ENCODE measurements at regions of chr9 and their contacts with region 1.

Region 1: GRCh38 chr9:114653556-114654159 is 3.9 kb downstream of the TEX53 start:
- DNase-seq: peak; percentile 89
- ATAC-seq: peak; percentile 83
- H3K4me3 Mint-ChIP-seq: no peak overlapping the region
- H3K27ac Mint-ChIP-seq: peak overlapping the region; percentile 14
- H3K4me1 Mint-ChIP-seq: peaks cover 26% of the 10 kb centered on the region
- H3K27me3 Mint-ChIP-seq: no peaks in the 10 kb centered on the region

Region 2: GRCh38 chr9:114339130-114339908 is 314.3 kb before region 1 on chr9:
- CTCF ChIA-PET with region 1: interaction called, 7 read pairs
- POLR2A ChIA-PET with region 1: no interaction called
- intact Hi-C with region 1: loop called in 1 of 2 experiments (anchors 1 kb)
- DNase-seq: peak; percentile 74
- ATAC-seq: peak; percentile 71
- H3K4me3 Mint-ChIP-seq: no peak overlapping the region
- H3K27ac Mint-ChIP-seq: peak overlapping the region; percentile 51
- H3K4me1 Mint-ChIP-seq: peaks cover 3% of the 10 kb centered on the region
- H3K27me3 Mint-ChIP-seq: no peaks in the 10 kb centered on the region

Region 3: DNA sequence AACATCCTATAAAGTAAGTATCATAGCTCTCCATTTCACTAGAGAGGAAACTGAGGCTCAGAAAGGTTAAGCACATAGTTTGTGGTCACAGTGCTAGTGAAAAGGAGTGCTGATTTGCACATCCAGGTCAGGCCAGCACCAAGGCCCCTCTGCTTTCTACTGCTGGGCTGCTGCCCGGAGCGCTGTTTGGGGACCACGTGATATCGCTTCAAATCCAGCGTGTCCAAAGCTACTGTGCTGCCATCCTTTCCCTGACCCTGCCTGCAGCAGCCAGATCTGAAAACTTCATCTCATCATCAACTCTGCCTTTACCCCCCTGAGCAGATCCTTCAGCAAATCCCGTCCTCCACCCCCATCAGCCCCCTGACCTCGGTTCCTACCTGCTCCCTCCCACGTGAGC is 225.2 kb before region 1 on chr9:
- CTCF ChIA-PET with region 1: interaction called, 11 read pairs
- POLR2A ChIA-PET with region 1: no interaction called
- intact Hi-C with region 1: no loop called
- DNase-seq: no peak
- ATAC-seq: no peak
- H3K4me3 Mint-ChIP-seq: no peak overlapping the region
- H3K27ac Mint-ChIP-seq: no peak overlapping the region
- H3K4me1 Mint-ChIP-seq: no peaks in the 10 kb centered on the region
- H3K27me3 Mint-ChIP-seq: no peaks in the 10 kb centered on the region

Region 4: GRCh38 chr9:114487607-114488300 is 165.9 kb before region 1 on chr9:
- CTCF ChIA-PET with region 1: interaction called, 55 read pairs
- POLR2A ChIA-PET with region 1: interaction called, 4 read pairs
- intact Hi-C with region 1: loop called (anchors 1 kb)
- DNase-seq: peak; percentile 72
- ATAC-seq: peak; percentile 63
- H3K4me3 Mint-ChIP-seq: no peak overlapping the region
- H3K27ac Mint-ChIP-seq: no peak overlapping the region
- H3K4me1 Mint-ChIP-seq: peaks cover 25% of the 10 kb centered on the region
- H3K27me3 Mint-ChIP-seq: no peaks in the 10 kb centered on the region

Region 5: DNA sequence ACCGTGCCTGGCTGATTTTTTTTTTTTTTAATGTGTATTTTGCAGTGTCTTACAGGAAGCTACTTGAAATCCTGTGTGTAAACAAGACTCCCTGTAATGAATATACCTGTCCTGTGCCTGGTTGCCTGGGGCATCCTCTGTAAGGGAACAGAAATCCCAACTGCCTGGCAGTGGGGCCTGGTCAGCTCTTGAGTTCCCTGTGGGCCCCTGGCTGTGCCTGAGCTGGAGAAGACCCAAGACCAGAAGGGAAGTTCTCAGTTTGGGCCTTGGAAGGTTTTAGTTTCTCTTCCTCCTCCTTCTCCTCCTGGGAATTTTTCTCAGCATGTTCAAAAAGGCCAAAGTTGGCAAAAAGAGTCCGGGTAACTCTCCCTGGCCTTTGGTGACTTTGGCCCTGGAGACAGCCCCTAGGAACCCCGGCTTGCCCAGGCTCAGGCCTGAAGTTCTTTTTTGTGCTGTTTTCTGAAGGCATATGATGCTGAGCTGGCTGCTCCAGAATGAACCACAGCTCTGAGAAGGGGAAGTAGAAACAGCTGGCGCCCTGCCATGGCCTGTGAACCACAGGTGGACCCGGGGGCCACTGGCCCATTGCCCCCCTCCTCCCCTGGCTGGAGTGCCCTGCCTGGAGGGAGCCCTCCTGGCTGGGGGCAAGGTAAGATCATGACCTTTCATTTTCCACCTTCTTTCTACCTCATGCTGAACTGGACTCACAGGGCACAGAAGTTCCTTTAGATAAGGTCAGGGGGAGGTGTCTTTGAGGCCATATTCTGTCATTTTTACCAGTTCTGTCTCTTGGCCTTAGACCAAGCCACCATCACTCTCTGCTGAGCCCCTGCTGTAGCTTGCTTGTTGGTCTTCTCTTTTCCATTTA is 36.8 kb before region 1 on chr9:
- CTCF ChIA-PET with region 1: interaction called, 9 read pairs
- POLR2A ChIA-PET with region 1: interaction called, 3 read pairs
- intact Hi-C with region 1: loop called in 1 of 2 experiments (anchors 5 kb)
- DNase-seq: peak; percentile 40
- ATAC-seq: peak; percentile 34
- H3K4me3 Mint-ChIP-seq: no peak overlapping the region
- H3K27ac Mint-ChIP-seq: peak overlapping the region; percentile 81
- H3K4me1 Mint-ChIP-seq: peaks cover 52% of the 10 kb centered on the region
- H3K27me3 Mint-ChIP-seq: no peaks in the 10 kb centered on the region

Region 6: DNA sequence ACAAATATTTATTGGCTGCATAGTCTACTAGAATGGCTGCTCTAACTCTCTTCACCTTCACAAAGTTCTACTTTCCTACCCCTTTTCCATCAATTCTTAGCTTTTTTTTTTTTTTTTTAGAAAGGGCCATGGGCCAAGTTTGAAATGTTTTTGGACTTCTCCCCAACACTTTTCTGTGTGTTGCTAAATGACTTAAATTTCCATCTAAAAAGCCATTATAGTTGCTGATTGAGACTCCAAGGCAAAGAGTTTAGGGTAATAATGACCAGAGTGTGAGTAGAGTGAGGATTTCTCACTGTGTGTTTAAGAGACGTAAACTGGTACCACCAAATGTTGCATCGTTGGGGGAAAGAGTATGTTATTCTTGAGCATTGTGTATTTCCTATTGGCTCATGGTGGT is 439.9 kb after region 1 on chr9:
- CTCF ChIA-PET with region 1: no interaction called
- POLR2A ChIA-PET with region 1: no interaction called
- intact Hi-C with region 1: no loop called
- DNase-seq: no peak
- ATAC-seq: no peak
- H3K4me3 Mint-ChIP-seq: no peak overlapping the region
- H3K27ac Mint-ChIP-seq: no peak overlapping the region
- H3K4me1 Mint-ChIP-seq: no peaks in the 10 kb centered on the region
- H3K27me3 Mint-ChIP-seq: peaks cover 24% of the 10 kb centered on the region